ENCODE measurements at regions of chr19 and their contacts with region 1.

Region 1: DNA sequence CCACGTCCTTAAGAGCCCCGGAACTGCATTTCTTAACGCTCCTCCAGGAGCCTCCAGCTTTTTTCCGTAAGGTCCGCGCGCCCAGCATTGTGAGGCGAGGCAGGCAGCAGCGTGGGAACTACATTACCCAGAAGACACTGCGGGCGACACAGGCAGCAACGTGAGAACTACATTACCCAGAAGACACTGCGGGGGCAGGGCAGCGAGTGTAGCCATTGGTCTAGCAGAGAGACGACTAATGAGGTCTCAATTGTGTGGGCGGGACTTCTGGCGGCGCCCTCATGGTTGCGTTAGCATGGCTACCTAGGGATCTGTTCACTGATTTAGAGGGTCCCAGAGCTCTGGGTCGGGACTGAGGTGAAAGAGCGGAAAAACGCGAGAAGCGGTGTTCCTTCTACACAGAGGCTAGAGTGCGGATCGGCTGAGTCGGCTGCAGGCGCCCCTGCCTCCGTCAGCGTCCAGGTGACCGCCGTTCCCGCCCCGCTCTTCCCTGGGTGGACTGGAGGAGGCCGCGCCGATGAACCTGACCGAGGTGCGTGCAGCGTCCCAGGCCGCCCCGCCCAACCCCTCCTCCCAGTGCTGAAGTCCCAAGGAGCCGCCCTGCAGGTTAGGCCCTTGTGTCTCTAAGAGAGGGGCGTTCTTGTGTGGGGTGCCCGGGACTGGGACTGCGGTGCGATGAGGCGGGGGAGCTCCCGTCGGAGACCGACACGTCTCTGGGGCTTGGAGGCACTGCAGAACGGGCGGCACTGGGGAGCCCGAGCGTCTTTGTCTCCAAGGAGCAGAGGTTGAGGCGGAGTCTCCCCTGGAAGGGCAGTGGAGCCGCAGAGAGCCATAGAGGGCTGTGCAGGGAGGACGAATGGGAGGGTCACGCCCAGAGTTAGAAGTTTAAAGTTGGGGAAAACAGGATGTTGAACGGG is at the start of gene ZNF749:
- DNase-seq: peak; percentile 76 to 100 (median 96)
- ATAC-seq: peak; percentile 100
- H3K4me3 ChIP-seq: peak within 1 kb of the TSS; percentile 75
- H3K4me3 Mint-ChIP-seq: peak within 1 kb of the TSS; percentile 92 to 100 (median 98)
- H3K27ac ChIP-seq: peak within 1 kb of the TSS; percentile 77
- H3K27ac Mint-ChIP-seq: peak within 1 kb of the TSS; percentile 79 to 98 (median 95)
- H3K4me1 ChIP-seq: peaks cover 7 to 14% of the 10 kb centered on the region in 2 donors
- H3K4me1 Mint-ChIP-seq: peaks cover 23 to 42% (median 38%) of the 10 kb centered on the region in 7 donors
- H3K27me3 ChIP-seq: no peaks in the 10 kb centered on the region
- H3K27me3 Mint-ChIP-seq: no peaks in the 10 kb centered on the region
- total RNA-seq, gene ZNF749: 8.9 to 17.9 (median 13.2) TPM

Region 2: DNA sequence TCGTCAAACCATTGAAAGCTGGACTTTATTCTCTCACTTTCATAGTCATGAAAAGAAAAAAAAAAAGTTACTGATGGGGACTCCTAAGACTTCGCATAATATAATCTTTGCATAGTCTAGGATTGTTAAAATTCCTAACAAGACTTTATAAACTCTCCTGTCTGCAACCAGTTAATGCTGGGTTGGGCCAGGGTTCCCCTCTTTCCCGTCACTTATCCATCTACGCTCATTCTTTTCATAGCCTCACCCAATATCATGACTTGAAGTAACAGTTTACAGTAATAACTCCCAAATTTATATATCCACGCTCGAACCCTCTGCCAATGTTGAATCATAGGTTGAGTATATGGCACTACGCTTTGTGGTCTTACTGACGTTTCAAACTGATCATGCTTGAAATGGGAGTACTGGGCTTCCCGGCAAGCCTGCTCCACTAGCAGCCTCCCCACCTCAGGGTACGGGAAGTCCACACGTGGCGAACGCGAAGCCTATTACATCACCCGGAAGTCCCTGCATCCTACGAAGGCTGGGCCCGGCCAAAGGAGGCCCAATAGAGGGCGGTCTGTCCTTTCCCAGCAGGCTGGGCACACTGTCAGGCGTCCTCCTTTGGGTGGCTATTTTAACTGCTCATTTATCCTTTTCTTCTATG is 155.8 kb before region 1 on chr19:
- CTCF ChIA-PET with region 1: no interaction called
- POLR2A ChIA-PET with region 1: no interaction called
- intact Hi-C with region 1: loop called in 1 of 2 experiments (anchors 1 kb)
- DNase-seq: peak in 6 of 9 donors; percentile 60 to 81 (median 78)
- ATAC-seq: peak; percentile 85
- H3K4me3 ChIP-seq: peak overlapping the region; percentile 80
- H3K4me3 Mint-ChIP-seq: no peak overlapping the region
- H3K27ac ChIP-seq: peak overlapping the region; percentile 98
- H3K27ac Mint-ChIP-seq: peak overlapping the region in 2 of 9 donors; percentile 6 to 51
- H3K4me1 ChIP-seq: peaks cover 18 to 23% of the 10 kb centered on the region in 2 donors
- H3K4me1 Mint-ChIP-seq: peaks cover 7 to 33% (median 25%) of the 10 kb centered on the region in 7 donors
- H3K27me3 ChIP-seq: no peaks in the 10 kb centered on the region
- H3K27me3 Mint-ChIP-seq: no peaks in the 10 kb centered on the region

Region 3: DNA sequence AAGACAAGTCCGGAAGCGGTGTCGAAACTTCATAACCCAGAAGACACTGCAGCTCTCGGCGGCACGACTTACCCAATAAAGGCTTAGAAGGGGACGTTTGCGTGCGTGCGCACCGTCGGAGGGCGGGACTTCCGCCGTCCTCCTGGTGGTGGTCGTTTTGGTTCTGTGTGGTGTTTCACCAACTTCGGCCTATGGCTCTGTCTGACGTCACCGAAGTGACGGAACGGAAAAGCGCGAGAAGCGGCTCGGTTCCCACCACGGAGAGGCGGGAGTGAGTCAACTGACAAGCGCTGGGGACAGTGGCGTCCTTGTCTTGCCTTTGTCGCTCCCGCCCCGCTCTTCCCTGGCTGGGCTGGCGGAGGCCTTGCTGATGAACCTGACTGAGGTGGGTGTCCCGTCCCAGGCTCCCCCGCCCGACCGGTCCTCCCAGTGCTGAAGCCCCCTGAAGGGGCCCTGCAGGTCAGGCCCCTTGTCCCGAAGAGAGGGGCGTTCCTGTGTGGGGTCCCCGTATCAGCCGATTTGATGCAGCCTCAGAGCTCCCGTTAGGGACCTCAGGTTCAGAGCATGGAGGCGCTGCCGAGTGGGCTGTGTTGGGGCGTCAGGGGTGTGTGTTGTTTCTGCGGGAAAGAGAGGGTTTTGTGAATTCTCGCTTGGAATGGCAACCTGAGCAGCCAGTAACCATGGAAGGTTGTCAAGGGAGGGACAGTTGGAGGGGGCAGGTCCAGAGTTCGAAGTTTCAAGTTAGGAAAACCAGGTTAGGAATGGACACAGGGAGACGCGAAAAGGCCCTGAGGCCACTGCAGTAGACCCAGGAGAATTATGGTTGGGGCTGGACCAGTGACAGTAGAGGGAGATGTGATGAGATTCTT is 45.4 kb before region 1 on chr19 and contains the start of gene ZNF548:
- CTCF ChIA-PET with region 1: no interaction called
- POLR2A ChIA-PET with region 1: interaction called, 3 read pairs
- intact Hi-C with region 1: loop called (anchors 1 kb)
- DNase-seq: peak; percentile 85 to 99 (median 92)
- ATAC-seq: peak; percentile 98
- H3K4me3 ChIP-seq: peak within 1 kb of the TSS; percentile 72
- H3K4me3 Mint-ChIP-seq: peak within 1 kb of the TSS; percentile 89 to 100 (median 97)
- H3K27ac ChIP-seq: peak within 1 kb of the TSS; percentile 93
- H3K27ac Mint-ChIP-seq: peak within 1 kb of the TSS; percentile 91 to 100 (median 97)
- H3K4me1 ChIP-seq: peaks cover 13 to 15% of the 10 kb centered on the region in 2 donors
- H3K4me1 Mint-ChIP-seq: peaks cover 11 to 45% (median 29%) of the 10 kb centered on the region in 7 donors
- H3K27me3 ChIP-seq: no peaks in the 10 kb centered on the region
- H3K27me3 Mint-ChIP-seq: no peaks in the 10 kb centered on the region
- total RNA-seq, gene ZNF548: 26.4 to 115 (median 66.9) TPM

Region 4: GRCh38 chr19:57527136-57527881 is 92.0 kb after region 1 on chr19 and contains the start of gene ZNF549:
- CTCF ChIA-PET with region 1: no interaction called
- POLR2A ChIA-PET with region 1: no interaction called
- intact Hi-C with region 1: loop called (anchors 1 kb)
- DNase-seq: peak; percentile 65 to 90 (median 88)
- ATAC-seq: peak; percentile 99
- H3K4me3 ChIP-seq: peak within 1 kb of the TSS; percentile 98
- H3K4me3 Mint-ChIP-seq: peak within 1 kb of the TSS; percentile 89 to 98 (median 96)
- H3K27ac ChIP-seq: peak within 1 kb of the TSS; percentile 94
- H3K27ac Mint-ChIP-seq: peak within 1 kb of the TSS; percentile 80 to 98 (median 95)
- H3K4me1 ChIP-seq: peaks cover 14 to 18% of the 10 kb centered on the region in 2 donors
- H3K4me1 Mint-ChIP-seq: peaks cover 15 to 36% (median 32%) of the 10 kb centered on the region in 7 donors
- H3K27me3 ChIP-seq: no peaks in the 10 kb centered on the region
- H3K27me3 Mint-ChIP-seq: peaks cover 0 to 4% (median 0%) of the 10 kb centered on the region in 5 donors
- total RNA-seq, gene ZNF549: 6.9 to 24.8 (median 11.3) TPM

Region 5: GRCh38 chr19:57583521-57584416 is 148.4 kb after region 1 on chr19 and contains the start of gene ZIK1:
- CTCF ChIA-PET with region 1: no interaction called
- POLR2A ChIA-PET with region 1: no interaction called
- intact Hi-C with region 1: loop called (anchors 1 to 2 kb)
- DNase-seq: peak; percentile 61 to 91 (median 85)
- ATAC-seq: peak; percentile 93
- H3K4me3 ChIP-seq: peak within 1 kb of the TSS; percentile 55
- H3K4me3 Mint-ChIP-seq: peak within 1 kb of the TSS; percentile 89 to 99 (median 94)
- H3K27ac ChIP-seq: peak within 1 kb of the TSS; percentile 45
- H3K27ac Mint-ChIP-seq: peak within 1 kb of the TSS; percentile 76 to 95 (median 90)
- H3K4me1 ChIP-seq: peaks cover 10 to 12% of the 10 kb centered on the region in 2 donors
- H3K4me1 Mint-ChIP-seq: peaks cover 12 to 28% (median 24%) of the 10 kb centered on the region in 7 donors
- H3K27me3 ChIP-seq: no peaks in the 10 kb centered on the region
- H3K27me3 Mint-ChIP-seq: no peaks in the 10 kb centered on the region
- total RNA-seq, gene ZIK1: 4.8 to 14.1 (median 7.0) TPM

Region 6: GRCh38 chr19:57682226-57682766 is 247.0 kb after region 1 on chr19:
- CTCF ChIA-PET with region 1: no interaction called
- POLR2A ChIA-PET with region 1: interaction called, 3 read pairs
- intact Hi-C with region 1: loop called in 1 of 2 experiments (anchors 2 kb)
- DNase-seq: no peak
- ATAC-seq: no peak
- H3K4me3 ChIP-seq: peak overlapping the region; percentile 93
- H3K4me3 Mint-ChIP-seq: peak overlapping the region; percentile 89 to 99 (median 97)
- H3K27ac ChIP-seq: peak overlapping the region; percentile 80
- H3K27ac Mint-ChIP-seq: peak overlapping the region; percentile 90 to 98 (median 96)
- H3K4me1 ChIP-seq: peaks cover 9 to 13% of the 10 kb centered on the region in 2 donors
- H3K4me1 Mint-ChIP-seq: peaks cover 25 to 46% (median 39%) of the 10 kb centered on the region in 7 donors
- H3K27me3 ChIP-seq: no peaks in the 10 kb centered on the region
- H3K27me3 Mint-ChIP-seq: peaks cover 2 to 8% (median 7%) of the 10 kb centered on the region in 5 donors

Region 7: DNA sequence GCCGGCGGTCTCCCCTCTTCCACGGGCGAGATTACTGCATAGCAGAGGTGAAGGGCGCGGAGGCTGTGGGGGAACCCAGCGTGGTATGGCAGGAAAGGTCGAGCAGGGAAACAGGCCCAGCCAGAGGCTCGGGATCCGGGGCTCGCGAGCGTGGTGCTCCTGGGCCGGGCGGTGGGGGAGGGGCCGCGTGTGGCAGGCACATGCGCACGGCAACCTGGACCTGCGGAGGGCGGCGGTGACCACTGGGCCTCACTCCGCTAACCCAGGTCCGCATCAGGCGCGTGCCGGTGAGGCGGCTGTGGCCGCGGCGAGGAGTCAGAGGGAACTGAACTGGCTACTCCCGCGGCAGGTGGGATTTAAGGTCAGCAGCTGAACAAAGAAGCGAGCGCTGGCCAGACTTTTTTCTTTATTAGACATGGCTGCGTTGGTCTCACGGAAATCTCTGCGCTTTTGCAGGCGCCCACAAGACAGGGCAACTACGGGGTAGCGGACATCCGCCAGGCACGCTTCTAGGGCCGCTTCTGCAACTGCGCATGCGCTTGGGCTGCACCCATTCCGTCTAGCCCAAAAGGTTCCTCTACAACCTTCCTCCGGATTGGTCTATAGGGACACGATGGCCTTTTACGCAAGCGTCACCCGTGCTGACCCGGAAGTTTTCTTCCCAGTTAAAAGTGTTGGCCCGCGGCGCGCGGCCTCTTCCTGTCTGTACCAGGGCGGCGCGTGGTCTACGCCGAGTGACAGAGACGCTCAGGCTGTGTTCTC is 951.4 kb after region 1 on chr19 and contains the start of gene RPS5:
- CTCF ChIA-PET with region 1: no interaction called
- POLR2A ChIA-PET with region 1: no interaction called
- intact Hi-C with region 1: loop called in 1 of 2 experiments (anchors 5 kb)
- DNase-seq: peak; percentile 84 to 98 (median 96)
- ATAC-seq: peak; percentile 97
- H3K4me3 ChIP-seq: peak within 1 kb of the TSS; percentile 75
- H3K4me3 Mint-ChIP-seq: peak within 1 kb of the TSS; percentile 89 to 96 (median 94)
- H3K27ac ChIP-seq: peak within 1 kb of the TSS; percentile 94
- H3K27ac Mint-ChIP-seq: peak within 1 kb of the TSS; percentile 94 to 99 (median 97)
- H3K4me1 ChIP-seq: peaks cover 26% of the 10 kb centered on the region in 2 donors
- H3K4me1 Mint-ChIP-seq: peaks cover 22 to 59% (median 45%) of the 10 kb centered on the region in 7 donors
- H3K27me3 ChIP-seq: no peaks in the 10 kb centered on the region
- H3K27me3 Mint-ChIP-seq: peaks cover 0 to 3% (median 0%) of the 10 kb centered on the region in 5 donors
- total RNA-seq, gene RPS5: 911 to 1,684 (median 1,502) TPM

Measured in naive thymus-derived CD4-positive, alpha-beta T cell (primary cell).